ENCODE measurements at regions of chr1 and their contacts with region 1.

Region 1: DNA sequence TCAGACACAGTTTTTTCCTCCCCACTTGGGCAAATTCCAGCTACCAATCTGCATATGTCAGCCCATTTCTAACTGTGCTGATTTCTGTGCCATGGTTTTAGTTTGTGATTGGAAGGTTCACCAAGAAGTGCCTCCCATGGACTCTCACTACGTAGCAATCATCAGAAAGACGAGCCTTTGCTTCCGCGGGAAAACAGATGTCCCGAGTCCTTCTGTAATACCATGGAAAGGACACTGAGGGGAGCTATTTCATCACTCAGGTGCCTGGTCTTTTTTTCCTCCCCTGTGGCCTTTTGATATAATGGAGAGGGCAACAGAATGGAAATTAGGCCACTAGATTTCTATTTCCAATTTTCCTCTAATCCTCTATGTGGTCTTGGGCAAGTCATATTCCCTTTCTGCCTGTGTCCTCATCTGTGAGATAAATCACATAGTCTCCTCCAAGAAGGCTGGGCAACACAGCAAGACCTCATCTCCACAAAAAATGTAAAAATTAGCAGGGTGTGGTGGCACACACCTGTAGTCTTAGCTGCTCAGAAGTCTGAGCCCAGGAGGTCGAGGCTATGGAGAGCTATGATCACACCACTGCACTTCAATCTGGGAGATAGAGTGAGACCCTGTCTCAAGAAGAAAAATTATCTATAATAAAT is 24.8 kb downstream of the LEMD1 start:
- DNase-seq: no peak
- ATAC-seq: no peak
- H3K4me3 Mint-ChIP-seq: no peak overlapping the region
- H3K27ac Mint-ChIP-seq: no peak overlapping the region
- H3K4me1 Mint-ChIP-seq: no peaks in the 10 kb centered on the region
- H3K27me3 Mint-ChIP-seq: peaks cover 31% of the 10 kb centered on the region

Region 2: DNA sequence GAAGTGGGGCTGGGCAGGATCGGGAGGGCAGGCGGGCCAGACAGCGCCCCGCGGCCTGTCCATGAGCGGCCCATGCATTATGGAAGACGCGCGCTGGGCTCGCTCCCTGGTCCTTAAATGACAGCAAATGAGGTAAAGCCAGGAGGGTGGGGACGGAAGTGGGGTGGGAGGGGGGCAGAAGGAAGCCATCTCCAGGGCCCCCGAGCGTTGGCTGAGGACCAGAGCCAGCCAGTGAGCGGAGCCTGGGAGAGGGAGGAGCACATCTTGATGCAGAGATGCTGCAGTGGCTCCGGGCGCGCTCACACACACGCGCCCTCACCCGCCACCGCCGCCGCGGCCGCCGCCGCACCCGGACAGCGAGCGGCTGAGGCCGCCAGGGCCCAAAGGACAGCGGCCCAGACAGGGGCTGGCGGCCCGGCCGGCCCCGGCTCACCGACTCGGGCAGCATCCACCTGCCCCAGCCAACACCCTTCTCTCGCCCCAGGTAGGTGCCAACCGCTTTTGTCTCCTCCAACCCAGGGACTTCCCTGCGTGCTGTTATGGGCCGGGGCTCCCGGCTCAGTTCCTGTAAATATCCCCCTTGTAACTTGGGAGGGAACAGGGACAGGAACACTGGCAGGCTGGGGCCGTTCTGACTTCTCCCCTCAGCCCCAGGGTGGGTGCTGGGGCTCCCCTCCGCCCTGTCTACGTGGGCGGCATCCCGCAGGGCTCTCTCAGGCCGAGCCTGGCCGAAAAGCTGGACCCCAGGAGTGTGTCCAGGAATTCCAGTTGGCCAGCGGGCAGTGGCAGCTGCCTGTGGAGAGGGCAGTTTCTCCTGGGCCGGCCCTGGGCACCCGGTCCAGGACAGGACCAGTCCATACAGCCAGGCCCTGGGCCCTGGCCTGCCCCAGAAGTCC is 353.9 kb before region 1 on chr1 and contains the start of gene CNTN2:
- CTCF ChIA-PET with region 1: no interaction called
- DNase-seq: no peak
- ATAC-seq: no peak
- H3K4me3 Mint-ChIP-seq: no peak within 1 kb of the TSS
- H3K27ac Mint-ChIP-seq: no peak within 1 kb of the TSS
- H3K4me1 Mint-ChIP-seq: no peaks in the 10 kb centered on the region
- H3K27me3 Mint-ChIP-seq: peaks cover 62% of the 10 kb centered on the region
- total RNA-seq, gene CNTN2: not detected

Region 3: GRCh38 chr1:205430696-205431305 is 33.7 kb after region 1 on chr1:
- CTCF ChIA-PET with region 1: interaction called, 25 read pairs
- DNase-seq: peak; percentile 57
- ATAC-seq: peak; percentile 80
- H3K4me3 Mint-ChIP-seq: peak overlapping the region; percentile 70
- H3K27ac Mint-ChIP-seq: peak overlapping the region; percentile 38
- H3K4me1 Mint-ChIP-seq: peaks cover 9% of the 10 kb centered on the region
- H3K27me3 Mint-ChIP-seq: peaks cover 24% of the 10 kb centered on the region

Region 4: GRCh38 chr1:205700865-205701401 is 303.8 kb after region 1 on chr1:
- CTCF ChIA-PET with region 1: no interaction called
- DNase-seq: no peak
- ATAC-seq: no peak
- H3K4me3 Mint-ChIP-seq: no peak overlapping the region
- H3K27ac Mint-ChIP-seq: no peak overlapping the region
- H3K4me1 Mint-ChIP-seq: peaks cover 2% of the 10 kb centered on the region
- H3K27me3 Mint-ChIP-seq: peaks cover 16% of the 10 kb centered on the region